ENCODE measurements at regions of chr7 and their contacts with region 1.

Region 1: GRCh38 chr7:75686551-75686950 is 52.2 kb downstream of the HIP1 start:
- DNase-seq: no peak

Region 2: GRCh38 chr7:75647709-75648438 is 38.7 kb before region 1 on chr7:
- CTCF ChIA-PET with region 1: interaction called, 15 read pairs
- POLR2A ChIA-PET with region 1: no interaction called
- DNase-seq: no peak